ENCODE measurements at regions of chr16 and their contacts with region 1.

Region 1: GRCh38 chr16:69741919-69742904 is 12.5 kb downstream of the NOB1 start:
- DNase-seq: no peak
- H3K4me3 Mint-ChIP-seq: no peak overlapping the region
- H3K27ac Mint-ChIP-seq: no peak overlapping the region
- H3K4me1 Mint-ChIP-seq: no peaks in the 10 kb centered on the region
- H3K27me3 Mint-ChIP-seq: no peaks in the 10 kb centered on the region

Region 2: GRCh38 chr16:69709456-69710084 is 32.6 kb before region 1 on chr16:
- CTCF ChIA-PET with region 1: interaction called, 11 read pairs
- POLR2A ChIA-PET with region 1: no interaction called
- DNase-seq: no peak
- H3K4me3 Mint-ChIP-seq: no peak overlapping the region
- H3K27ac Mint-ChIP-seq: no peak overlapping the region
- H3K4me1 Mint-ChIP-seq: peaks cover 3% of the 10 kb centered on the region
- H3K27me3 Mint-ChIP-seq: no peaks in the 10 kb centered on the region